ENCODE measurements at regions of chr1 and their contacts with region 1.

Region 1: GRCh38 chr1:84192681-84193080 is 48.6 kb downstream of the PRKACB start:
- DNase-seq: no peak
- ATAC-seq: no peak
- H3K4me3 Mint-ChIP-seq: no peak overlapping the region
- H3K27ac Mint-ChIP-seq: no peak overlapping the region
- H3K4me1 Mint-ChIP-seq: no peaks in the 10 kb centered on the region
- H3K27me3 Mint-ChIP-seq: no peaks in the 10 kb centered on the region
- CTCF ChIP-seq: no peak

Region 2: GRCh38 chr1:84223751-84224432 is 31.2 kb after region 1 on chr1:
- CTCF ChIA-PET with region 1: no interaction called
- POLR2A ChIA-PET with region 1: no interaction called
- intact Hi-C with region 1: loop called (anchors 5 kb)
- DNase-seq: no peak
- ATAC-seq: no peak
- H3K4me3 Mint-ChIP-seq: no peak overlapping the region
- H3K27ac Mint-ChIP-seq: no peak overlapping the region
- H3K4me1 Mint-ChIP-seq: no peaks in the 10 kb centered on the region
- H3K27me3 Mint-ChIP-seq: no peaks in the 10 kb centered on the region
- CTCF ChIP-seq: no peak

Measured in activated B cell treated with CpG ODN at 0.5 μM for 24 hours (primary cell).